Tibial artery (tissue), 4 donors: ENCODE measurements at regions of chr18 and their contacts with region 1.

Region 1: GRCh38 chr18:26656944-26657536 is 108.7 kb upstream of the KCTD1 start:
- DNase-seq: peak; percentile 60 to 80
- H3K4me3 ChIP-seq: peak overlapping the region; percentile 76 to 91
- H3K27ac ChIP-seq: peak overlapping the region; percentile 86 to 87
- H3K4me1 ChIP-seq: peaks cover 0 to 20% (median 16%) of the 10 kb centered on the region in 4 donors
- H3K27me3 ChIP-seq: no peaks in the 10 kb centered on the region
- CTCF ChIP-seq: no peak

Region 2: DNA sequence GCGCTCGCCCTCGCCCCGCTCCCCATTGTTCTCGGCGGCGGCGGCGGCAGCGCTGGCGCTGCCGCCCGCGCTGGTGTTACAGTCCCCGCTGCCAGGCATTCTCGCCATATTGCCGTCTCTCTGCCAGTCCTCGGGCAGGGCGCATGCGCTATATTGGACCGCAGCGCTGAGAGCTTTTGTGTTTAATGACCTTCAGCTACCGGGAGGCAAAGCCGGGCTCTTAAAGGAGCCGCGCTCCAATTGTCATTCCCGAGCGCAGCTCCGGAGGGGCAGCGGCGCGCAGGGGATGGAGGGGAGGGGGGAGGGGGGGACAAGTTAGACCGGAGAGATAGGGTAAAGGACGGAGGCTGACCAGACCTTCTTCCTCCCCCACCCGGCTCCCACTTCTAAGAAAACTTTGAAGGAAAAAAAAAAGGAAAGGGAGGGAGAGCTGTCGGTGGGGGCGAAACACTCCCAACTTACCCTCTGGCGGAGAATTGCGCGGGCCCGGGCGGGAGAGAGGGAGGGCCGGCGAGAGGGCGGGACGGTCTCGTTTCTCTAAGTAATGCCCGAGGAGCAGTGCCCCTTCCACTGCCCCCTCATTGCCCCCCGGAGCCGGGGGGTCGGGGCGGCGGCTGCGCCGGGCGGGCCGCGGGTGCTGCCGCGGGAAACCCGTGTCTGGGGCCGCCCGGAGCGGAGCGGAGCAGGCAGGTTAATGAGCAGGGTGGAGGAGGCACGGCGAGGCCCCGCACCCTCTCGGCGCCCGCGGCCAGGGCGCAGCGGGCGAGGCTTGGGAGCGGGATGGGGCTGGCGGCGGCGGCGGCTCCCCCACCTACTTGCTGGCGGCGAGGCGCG is 108.4 kb before region 1 on chr18 and contains the start of gene KCTD1:
- intact Hi-C with region 1: loop called (anchors 2 kb)
- DNase-seq: peak; percentile 72 to 83
- H3K4me3 ChIP-seq: peak within 1 kb of the TSS; percentile 77 to 91
- H3K27ac ChIP-seq: peak within 1 kb of the TSS; percentile 85 to 93
- H3K4me1 ChIP-seq: peaks cover 0 to 51% (median 30%) of the 10 kb centered on the region in 4 donors
- H3K27me3 ChIP-seq: no peaks in the 10 kb centered on the region
- CTCF ChIP-seq: no peak